GM12878 (cell line): ENCODE measurements at regions of chr11 and their contacts with region 1.

Region 1: GRCh38 chr11:11787305-11788062 is 54.3 kb upstream of the USP47 start:
- DNase-seq: peak; percentile 23
- ATAC-seq: peak; percentile 98
- H3K4me3 ChIP-seq: no peak overlapping the region
- H3K27ac ChIP-seq: no peak overlapping the region
- H3K4me1 ChIP-seq: no peaks in the 10 kb centered on the region
- H3K27me3 ChIP-seq: no peaks in the 10 kb centered on the region; a peak in 1 of 4 replicates
- CTCF ChIP-seq: peak; percentile 68 to 86 (median 81)
- EP300 ChIP-seq: no peak
- POLR2A ChIP-seq: no peak
- RAD21 ChIP-seq: peak; percentile 95

Region 2: DNA sequence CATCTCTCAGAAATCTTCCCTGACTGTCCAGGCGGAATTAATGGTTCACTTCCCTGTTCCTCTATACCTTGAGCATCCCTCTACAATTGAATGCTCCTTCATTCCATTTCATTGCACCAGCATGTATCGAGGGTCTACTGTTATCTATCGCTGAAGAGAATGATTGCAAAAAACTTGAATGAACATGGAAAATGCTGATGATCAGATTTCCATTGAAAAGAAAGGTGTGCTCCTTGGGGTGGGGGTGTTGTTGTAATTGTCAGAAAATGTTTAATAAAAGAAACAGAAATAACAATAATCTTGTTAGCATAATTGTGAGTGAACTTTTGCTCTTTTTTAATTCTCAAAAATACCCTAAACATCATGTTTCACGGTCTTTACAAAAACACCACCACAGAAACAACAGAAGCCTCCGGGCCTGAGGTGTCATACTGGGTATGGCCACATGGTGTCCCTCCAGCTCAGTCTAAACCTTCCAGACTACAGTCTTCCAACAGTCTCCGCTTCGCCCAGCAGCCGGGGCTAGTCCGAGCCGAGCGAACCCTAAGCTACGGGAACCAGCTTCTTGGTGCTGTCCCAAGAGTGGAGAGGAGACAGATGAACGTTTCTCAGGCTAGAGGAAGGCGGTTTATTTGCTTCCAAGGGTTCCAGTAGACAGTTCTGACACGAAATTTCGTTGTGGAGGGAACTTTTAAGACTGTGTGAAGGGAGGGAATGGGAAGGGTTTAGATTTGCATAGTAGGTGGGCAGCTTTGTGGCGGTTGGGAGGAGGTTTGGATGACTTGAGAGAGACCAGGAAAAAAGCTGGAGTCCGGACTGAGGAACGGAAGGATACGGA is 853.8 kb before region 1 on chr11:
- CTCF ChIA-PET with region 1: interaction called, 19 read pairs
- POLR2A ChIA-PET with region 1: no interaction called
- RAD21 ChIA-PET with region 1: interaction called, 9 read pairs
- SMC1A ChIA-PET with region 1: interaction called, 6 read pairs
- in situ Hi-C with region 1: loop called (anchors 5 kb)
- intact Hi-C with region 1: loop called (anchors 1 kb)
- DNase-seq: peak; percentile 39
- ATAC-seq: peak; percentile 94
- H3K4me3 ChIP-seq: no peak overlapping the region
- H3K27ac ChIP-seq: no peak overlapping the region
- H3K4me1 ChIP-seq: no peaks in the 10 kb centered on the region
- H3K27me3 ChIP-seq: peaks cover 4 to 13% of the 10 kb centered on the region in 2 experiments
- CTCF ChIP-seq: peak; percentile 91 to 97 (median 95); a peak in 5 of 6 replicates
- EP300 ChIP-seq: no peak
- POLR2A ChIP-seq: no peak
- RAD21 ChIP-seq: peak; percentile 86

Region 3: GRCh38 chr11:11036848-11037732 is 750.4 kb before region 1 on chr11:
- CTCF ChIA-PET with region 1: interaction called, 32 read pairs
- POLR2A ChIA-PET with region 1: no interaction called
- RAD21 ChIA-PET with region 1: interaction called, 11 read pairs
- SMC1A ChIA-PET with region 1: interaction called, 9 read pairs
- in situ Hi-C with region 1: no loop called
- intact Hi-C with region 1: loop called (anchors 2 kb)
- DNase-seq: no peak
- ATAC-seq: peak; percentile 92
- H3K4me3 ChIP-seq: no peak overlapping the region
- H3K27ac ChIP-seq: no peak overlapping the region
- H3K4me1 ChIP-seq: no peaks in the 10 kb centered on the region
- H3K27me3 ChIP-seq: no peaks in the 10 kb centered on the region
- CTCF ChIP-seq: peak; percentile 69 to 81 (median 73)
- EP300 ChIP-seq: no peak
- POLR2A ChIP-seq: no peak
- RAD21 ChIP-seq: peak; percentile 78

Region 4: DNA sequence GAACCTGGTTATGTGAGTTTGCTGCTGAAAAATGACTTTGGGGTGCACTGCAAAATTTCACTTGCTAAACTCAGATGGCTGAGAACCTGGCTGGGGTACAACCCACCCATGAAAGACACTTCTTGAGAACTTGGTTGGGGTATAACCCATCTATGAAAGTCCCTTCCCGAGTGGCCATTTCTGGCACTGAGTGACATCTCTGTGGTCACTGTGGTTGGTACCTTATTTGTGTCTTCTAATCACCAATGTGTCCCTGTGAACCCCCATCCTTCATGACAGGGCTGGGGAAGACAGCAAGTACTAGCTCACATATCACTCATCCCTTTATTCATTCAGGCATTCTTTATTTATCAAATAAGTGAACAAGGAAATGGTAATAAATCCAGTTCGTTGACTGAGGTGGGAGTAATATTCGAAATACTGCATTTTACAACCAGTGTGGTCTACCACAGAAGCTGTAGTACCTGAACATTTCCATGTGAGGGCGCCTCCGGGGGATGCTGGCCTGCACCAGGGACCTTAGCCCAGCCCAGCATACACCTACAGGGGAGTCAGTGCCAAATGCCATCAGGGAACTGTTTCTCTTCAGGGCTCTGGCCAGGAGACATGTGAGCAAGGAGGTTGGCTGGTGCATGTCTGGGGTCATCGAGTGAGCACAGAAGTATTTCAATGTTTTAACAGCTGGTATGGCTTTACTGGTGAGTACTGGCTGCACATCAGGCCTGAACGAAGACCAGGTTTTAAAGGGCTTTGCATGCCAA is 556.5 kb before region 1 on chr11:
- CTCF ChIA-PET with region 1: interaction called, 3 read pairs
- POLR2A ChIA-PET with region 1: no interaction called
- RAD21 ChIA-PET with region 1: interaction called, 4 read pairs
- SMC1A ChIA-PET with region 1: no interaction called
- in situ Hi-C with region 1: no loop called
- intact Hi-C with region 1: loop called (anchors 10 kb)
- DNase-seq: peak; percentile 59
- ATAC-seq: peak; percentile 81
- H3K4me3 ChIP-seq: no peak overlapping the region
- H3K27ac ChIP-seq: no peak overlapping the region
- H3K4me1 ChIP-seq: no peaks in the 10 kb centered on the region; the same call in 1 of the 2 replicates
- H3K27me3 ChIP-seq: no peaks in the 10 kb centered on the region; a peak in 1 of 4 replicates
- CTCF ChIP-seq: peak; percentile 26 to 60 (median 57)
- EP300 ChIP-seq: no peak
- POLR2A ChIP-seq: no peak
- RAD21 ChIP-seq: peak; percentile 37

Region 5: DNA sequence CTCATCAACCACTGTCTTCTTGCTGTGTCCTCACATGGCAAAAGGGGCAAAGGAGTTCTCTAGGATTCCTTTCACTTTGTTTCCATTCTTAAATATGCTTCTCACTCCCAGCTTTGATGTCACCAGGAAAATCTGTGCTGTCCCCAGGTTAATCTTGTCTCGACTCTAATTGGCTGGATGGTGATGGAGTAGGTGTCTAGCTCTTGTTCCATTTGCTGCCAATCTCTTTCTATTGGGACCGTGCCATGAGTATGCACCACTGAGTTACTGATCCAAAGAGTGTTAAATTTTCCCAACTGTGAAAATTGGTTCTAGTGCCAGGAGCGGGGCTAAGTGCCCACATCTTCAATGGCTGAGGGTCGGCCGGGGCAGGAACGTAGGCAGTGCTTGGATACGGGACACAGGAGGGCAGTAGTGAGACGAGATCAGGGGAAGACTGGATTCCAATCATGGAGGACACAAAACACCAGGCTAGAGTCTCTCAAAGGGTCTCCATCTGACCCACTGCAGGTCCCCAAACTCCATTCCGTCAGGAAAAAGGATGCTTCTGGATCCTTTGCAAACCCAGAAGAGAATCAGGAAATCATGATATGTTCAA is 386.8 kb before region 1 on chr11:
- CTCF ChIA-PET with region 1: interaction called, 19 read pairs
- POLR2A ChIA-PET with region 1: no interaction called
- RAD21 ChIA-PET with region 1: interaction called, 12 read pairs
- SMC1A ChIA-PET with region 1: interaction called, 5 read pairs
- in situ Hi-C with region 1: no loop called
- intact Hi-C with region 1: loop called (anchors 2 kb)
- DNase-seq: no peak
- ATAC-seq: peak; percentile 65
- H3K4me3 ChIP-seq: no peak overlapping the region
- H3K27ac ChIP-seq: no peak overlapping the region
- H3K4me1 ChIP-seq: no peaks in the 10 kb centered on the region
- H3K27me3 ChIP-seq: no peaks in the 10 kb centered on the region
- CTCF ChIP-seq: peak; percentile 19 to 41 (median 21); a peak in 2 of 6 replicates
- EP300 ChIP-seq: no peak
- POLR2A ChIP-seq: no peak
- RAD21 ChIP-seq: no peak

Region 6: DNA sequence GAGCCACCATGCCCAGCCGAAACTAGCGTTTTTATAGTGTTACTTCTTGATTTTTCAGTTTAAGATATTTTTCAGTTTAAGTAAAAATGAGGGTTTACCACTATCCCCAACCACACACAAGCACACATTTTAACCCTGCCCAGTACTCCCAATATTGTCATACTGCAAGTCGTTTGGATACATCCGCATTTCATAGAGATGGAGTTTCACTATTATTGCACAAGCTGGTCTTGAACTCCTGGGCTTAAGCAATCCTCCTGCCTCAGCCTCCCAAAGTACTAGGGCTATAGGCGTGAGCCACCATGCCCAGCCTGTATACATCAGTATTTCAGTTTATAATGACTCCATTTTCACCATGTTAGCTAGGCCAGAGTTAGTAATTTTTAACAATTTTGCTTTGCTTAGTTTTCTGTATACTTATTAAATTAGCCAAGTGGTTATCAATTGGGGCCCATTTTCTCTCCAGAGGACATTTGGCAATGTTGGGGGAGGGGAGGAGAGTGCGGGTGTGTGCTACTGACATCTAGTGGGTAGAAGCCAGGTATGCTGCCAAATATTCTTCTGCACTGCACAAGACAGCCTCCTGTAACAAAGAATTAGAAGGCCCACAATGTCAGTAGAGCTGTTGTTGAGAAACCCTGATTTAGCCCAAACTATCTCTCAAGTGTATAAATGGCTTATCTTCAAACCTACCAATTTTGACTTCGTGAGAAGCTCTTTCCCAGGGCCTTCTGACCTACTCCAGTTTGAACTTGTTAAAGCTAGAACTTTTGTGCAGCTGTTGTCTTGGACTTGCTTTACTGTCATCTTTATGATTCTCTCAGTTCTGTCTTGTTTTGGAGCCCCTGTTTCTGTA is 61.6 kb after region 1 on chr11:
- CTCF ChIA-PET with region 1: interaction called, 18 read pairs
- POLR2A ChIA-PET with region 1: no interaction called
- RAD21 ChIA-PET with region 1: interaction called, 12 read pairs
- SMC1A ChIA-PET with region 1: interaction called, 12 read pairs
- in situ Hi-C with region 1: no loop called
- intact Hi-C with region 1: no loop called
- DNase-seq: peak; percentile 38
- ATAC-seq: peak; percentile 82
- H3K4me3 ChIP-seq: no peak overlapping the region; the same call in 1 of the 2 replicates
- H3K27ac ChIP-seq: peak overlapping the region; percentile 23; the same call in 1 of the 2 replicates
- H3K4me1 ChIP-seq: peaks cover 5% of the 10 kb centered on the region; the same call in 1 of the 2 replicates
- H3K27me3 ChIP-seq: no peaks in the 10 kb centered on the region
- CTCF ChIP-seq: peak; percentile 84 to 85 (median 85)
- EP300 ChIP-seq: no peak
- POLR2A ChIP-seq: no peak
- RAD21 ChIP-seq: peak; percentile 64

Region 7: GRCh38 chr11:11998091-11998781 is 210.8 kb after region 1 on chr11:
- CTCF ChIA-PET with region 1: no interaction called
- POLR2A ChIA-PET with region 1: no interaction called
- RAD21 ChIA-PET with region 1: no interaction called
- SMC1A ChIA-PET with region 1: no interaction called
- in situ Hi-C with region 1: no loop called
- intact Hi-C with region 1: no loop called
- DNase-seq: peak; percentile 21
- ATAC-seq: peak; percentile 61
- H3K4me3 ChIP-seq: no peak overlapping the region; the same call in 1 of the 2 replicates
- H3K27ac ChIP-seq: no peak overlapping the region
- H3K4me1 ChIP-seq: no peaks in the 10 kb centered on the region; the same call in 1 of the 2 replicates
- H3K27me3 ChIP-seq: peaks cover 0 to 1% of the 10 kb centered on the region in 2 experiments; a peak in 2 of 4 replicates
- CTCF ChIP-seq: no peak
- EP300 ChIP-seq: no peak
- POLR2A ChIP-seq: no peak
- RAD21 ChIP-seq: no peak

Region 8: GRCh38 chr11:12200279-12201010 is 413.0 kb after region 1 on chr11:
- CTCF ChIA-PET with region 1: no interaction called
- POLR2A ChIA-PET with region 1: no interaction called
- RAD21 ChIA-PET with region 1: no interaction called
- SMC1A ChIA-PET with region 1: no interaction called
- in situ Hi-C with region 1: no loop called
- intact Hi-C with region 1: no loop called
- DNase-seq: no peak
- ATAC-seq: no peak
- H3K4me3 ChIP-seq: no peak overlapping the region
- H3K27ac ChIP-seq: no peak overlapping the region
- H3K4me1 ChIP-seq: peaks cover 23% of the 10 kb centered on the region
- H3K27me3 ChIP-seq: no peaks in the 10 kb centered on the region
- CTCF ChIP-seq: no peak
- EP300 ChIP-seq: no peak
- POLR2A ChIP-seq: no peak
- RAD21 ChIP-seq: no peak

Region 9: DNA sequence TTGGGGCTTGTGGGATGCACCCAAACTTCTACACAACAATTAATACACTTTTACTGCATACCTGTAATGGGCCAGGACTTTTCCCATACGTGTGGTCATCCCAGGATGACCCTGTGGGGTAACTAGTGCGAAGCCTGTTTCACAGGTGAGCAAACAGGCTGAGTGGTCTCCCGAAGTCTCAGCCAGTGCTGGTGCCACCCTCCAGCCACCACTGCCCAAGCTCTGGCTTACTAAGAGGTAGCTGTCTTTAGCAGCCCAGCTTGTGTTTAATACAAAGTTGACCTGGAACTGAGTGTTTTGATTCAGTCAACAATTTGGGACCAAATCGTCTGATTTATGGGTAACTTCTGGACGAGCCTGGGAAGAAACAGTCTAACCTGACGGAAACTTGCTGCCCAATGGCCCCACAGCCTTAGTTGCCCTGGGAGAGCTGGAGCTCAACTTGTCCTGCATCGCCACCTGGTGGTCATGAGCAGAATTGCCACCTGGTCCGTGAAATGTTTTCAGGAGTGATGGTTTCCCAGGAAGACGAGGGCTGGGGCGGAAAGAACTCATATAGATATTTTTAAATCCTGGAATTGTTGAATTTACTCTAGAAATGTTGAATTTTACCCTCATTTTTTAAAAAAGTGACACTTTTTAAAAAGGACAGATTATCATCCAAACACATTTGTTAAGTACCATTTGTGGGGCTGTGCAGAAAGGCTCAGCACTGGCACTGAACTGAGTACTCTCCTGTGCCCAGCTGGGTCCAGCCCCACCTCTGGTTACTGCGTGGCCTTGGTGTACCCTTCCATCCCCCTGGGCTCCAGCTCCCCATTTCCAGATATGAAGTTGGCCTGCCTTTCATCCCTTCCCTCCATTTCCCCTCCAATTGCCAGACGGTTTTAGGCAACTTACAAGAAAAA is 494.3 kb after region 1 on chr11:
- CTCF ChIA-PET with region 1: interaction called, 4 read pairs
- POLR2A ChIA-PET with region 1: no interaction called
- RAD21 ChIA-PET with region 1: interaction called, 3 read pairs
- SMC1A ChIA-PET with region 1: no interaction called
- in situ Hi-C with region 1: loop called (anchors 25 kb)
- intact Hi-C with region 1: no loop called
- DNase-seq: peak; percentile 21
- ATAC-seq: peak; percentile 89
- H3K4me3 ChIP-seq: no peak overlapping the region
- H3K27ac ChIP-seq: no peak overlapping the region
- H3K4me1 ChIP-seq: no peaks in the 10 kb centered on the region
- H3K27me3 ChIP-seq: no peaks in the 10 kb centered on the region; a peak in 1 of 4 replicates
- CTCF ChIP-seq: peak; percentile 87 to 95 (median 93)
- EP300 ChIP-seq: no peak
- POLR2A ChIP-seq: no peak
- RAD21 ChIP-seq: peak; percentile 100